K562 (cell line): ENCODE measurements at regions of chr9 and their contacts with region 1.

Region 1: DNA sequence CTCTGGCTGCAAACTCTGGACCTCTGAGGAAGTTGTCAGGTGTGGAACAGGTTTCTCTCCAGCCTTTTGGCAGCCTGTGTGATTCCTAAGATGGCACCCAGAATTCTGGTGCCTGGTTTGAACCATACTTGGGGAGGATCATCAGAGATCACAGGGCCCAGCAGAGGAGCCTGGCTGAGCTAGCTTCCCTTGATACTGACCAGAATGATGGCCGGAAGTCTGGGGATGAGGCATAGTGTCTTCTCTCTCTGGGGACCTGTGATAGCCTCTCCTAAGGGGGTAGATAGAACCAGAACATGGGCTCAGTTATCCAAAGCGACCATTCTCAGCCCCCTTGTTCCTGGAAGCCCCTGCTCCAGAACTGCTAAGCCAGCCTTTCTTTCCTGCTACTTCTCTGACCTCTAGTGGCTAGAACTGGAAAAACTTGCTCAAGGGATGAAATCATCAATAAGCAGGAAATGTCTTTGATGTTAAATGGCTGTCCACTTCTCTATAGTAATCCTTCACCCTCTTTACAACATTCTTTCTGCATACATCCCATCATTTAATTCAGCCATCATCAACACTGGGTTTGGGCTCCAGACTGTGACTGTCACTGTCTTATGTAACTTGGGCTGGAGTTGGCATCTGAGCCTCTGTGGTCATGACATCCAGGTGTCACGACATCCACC is 55.1 kb downstream of the C9orf152 start:
- DNase-seq: peak; percentile 17 to 41 (median 28)
- ATAC-seq: peak; percentile 77
- H3K4me3 ChIP-seq: no peak overlapping the region
- H3K27ac ChIP-seq: no peak overlapping the region
- H3K4me1 ChIP-seq: no peaks in the 10 kb centered on the region
- H3K27me3 ChIP-seq: peaks cover 0 to 17% of the 10 kb centered on the region in 2 experiments; a peak in 1 of 5 replicates
- CTCF ChIP-seq: peak; percentile 46 to 69 (median 68); a peak in 5 of 6 replicates
- EP300 ChIP-seq: no peak
- POLR2A ChIP-seq: no peak
- RAD21 ChIP-seq: peak; percentile 69 to 81

Region 2: DNA sequence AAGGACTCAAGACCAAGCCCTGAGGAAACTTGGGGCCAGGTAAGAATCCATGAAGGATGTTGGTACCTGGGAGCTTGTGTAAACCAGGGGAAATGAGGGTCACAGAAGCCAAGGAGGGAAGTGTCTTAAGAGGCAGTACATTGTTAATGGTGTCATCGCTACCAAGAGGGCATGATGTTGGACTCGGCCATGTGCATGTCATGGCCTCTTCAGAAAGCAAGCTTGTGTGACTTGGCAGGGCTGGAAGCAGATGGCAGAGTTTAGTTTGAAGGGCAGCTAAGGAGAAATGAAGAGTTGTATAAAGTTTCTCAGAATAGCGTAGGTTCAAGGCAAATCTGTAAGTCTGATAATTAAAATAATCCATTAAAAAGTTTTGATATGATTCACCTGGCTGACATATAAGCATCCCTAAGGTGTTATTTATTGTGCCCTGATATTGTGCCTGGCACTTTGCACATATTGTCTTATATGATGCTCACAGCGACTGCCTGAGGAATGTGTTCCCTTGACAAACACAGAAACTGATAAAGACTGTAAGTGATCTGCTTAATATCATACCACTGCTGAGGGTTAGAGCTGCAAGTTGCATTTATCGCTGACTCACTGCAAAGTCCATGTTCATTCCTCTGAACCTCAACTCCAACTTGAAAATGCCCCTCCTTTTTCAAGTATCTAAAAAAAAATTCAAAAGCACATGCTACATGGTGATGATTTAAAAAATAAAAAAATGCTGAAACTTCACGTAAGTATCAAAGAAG is 573.5 kb before region 1 on chr9:
- CTCF ChIA-PET with region 1: no interaction called
- POLR2A ChIA-PET with region 1: no interaction called
- in situ Hi-C with region 1: loop called (anchors 25 kb)
- intact Hi-C with region 1: loop called (anchors 10 kb)
- DNase-seq: no peak
- ATAC-seq: no peak
- H3K4me3 ChIP-seq: no peak overlapping the region
- H3K27ac ChIP-seq: no peak overlapping the region
- H3K4me1 ChIP-seq: no peaks in the 10 kb centered on the region
- H3K27me3 ChIP-seq: no peaks in the 10 kb centered on the region; a peak in 1 of 5 replicates
- CTCF ChIP-seq: no peak
- EP300 ChIP-seq: no peak
- POLR2A ChIP-seq: no peak
- RAD21 ChIP-seq: no peak

Region 3: GRCh38 chr9:109590945-109591344 is 561.9 kb before region 1 on chr9:
- CTCF ChIA-PET with region 1: no interaction called
- POLR2A ChIA-PET with region 1: no interaction called
- in situ Hi-C with region 1: loop called (anchors 25 kb)
- intact Hi-C with region 1: loop called (anchors 10 kb)
- DNase-seq: no peak
- ATAC-seq: no peak
- H3K4me3 ChIP-seq: no peak overlapping the region
- H3K27ac ChIP-seq: no peak overlapping the region
- H3K4me1 ChIP-seq: no peaks in the 10 kb centered on the region
- H3K27me3 ChIP-seq: no peaks in the 10 kb centered on the region
- CTCF ChIP-seq: no peak
- EP300 ChIP-seq: no peak
- POLR2A ChIP-seq: no peak
- RAD21 ChIP-seq: no peak

Region 4: GRCh38 chr9:109817846-109818472 is 334.9 kb before region 1 on chr9:
- CTCF ChIA-PET with region 1: no interaction called
- POLR2A ChIA-PET with region 1: no interaction called
- in situ Hi-C with region 1: no loop called
- intact Hi-C with region 1: loop called (anchors 10 kb)
- DNase-seq: peak; percentile 65 to 82 (median 74)
- ATAC-seq: peak; percentile 94
- H3K4me3 ChIP-seq: no peak overlapping the region
- H3K27ac ChIP-seq: no peak overlapping the region
- H3K4me1 ChIP-seq: no peaks in the 10 kb centered on the region
- H3K27me3 ChIP-seq: no peaks in the 10 kb centered on the region
- CTCF ChIP-seq: peak; percentile 70 to 88 (median 81)
- EP300 ChIP-seq: no peak
- POLR2A ChIP-seq: no peak
- RAD21 ChIP-seq: peak; percentile 36 to 63

Region 5: GRCh38 chr9:109903515-109904138 is 249.2 kb before region 1 on chr9:
- CTCF ChIA-PET with region 1: no interaction called
- POLR2A ChIA-PET with region 1: no interaction called
- in situ Hi-C with region 1: loop called (anchors 10 kb)
- intact Hi-C with region 1: loop called (anchors 1 kb)
- DNase-seq: peak; percentile 50 to 68 (median 64)
- ATAC-seq: peak; percentile 93
- H3K4me3 ChIP-seq: no peak overlapping the region
- H3K27ac ChIP-seq: no peak overlapping the region
- H3K4me1 ChIP-seq: no peaks in the 10 kb centered on the region
- H3K27me3 ChIP-seq: no peaks in the 10 kb centered on the region
- CTCF ChIP-seq: peak; percentile 65 to 80 (median 72)
- EP300 ChIP-seq: no peak
- POLR2A ChIP-seq: no peak
- RAD21 ChIP-seq: peak; percentile 54 to 76